Cardiac septum (tissue), 1 donor: ENCODE measurements at regions of chr5 and their contacts with region 1.

Region 1: GRCh38 chr5:145681686-145682085 is 153.5 kb downstream of the PRELID2 start:
- DNase-seq: no peak

Region 2: GRCh38 chr5:145811834-145812625 is 130.3 kb after region 1 on chr5:
- intact Hi-C with region 1: loop called (anchors 5 kb)
- DNase-seq: no peak

Region 3: GRCh38 chr5:145825751-145826180 is 144.1 kb after region 1 on chr5:
- intact Hi-C with region 1: loop called (anchors 5 kb)
- DNase-seq: no peak

Region 4: GRCh38 chr5:146049014-146049703 is 367.5 kb after region 1 on chr5:
- intact Hi-C with region 1: loop called (anchors 5 kb)
- DNase-seq: no peak